ENCODE measurements at regions of chr16 and their contacts with region 1.

Region 1: GRCh38 chr16:4416200-4417032 is at the start of gene CORO7:
- DNase-seq: peak; percentile 98 to 100 (median 99)
- ATAC-seq: peak; percentile 71
- H3K4me3 ChIP-seq: peak within 1 kb of the TSS; percentile 81
- H3K4me3 Mint-ChIP-seq: peak within 1 kb of the TSS; percentile 96
- H3K27ac ChIP-seq: peak within 1 kb of the TSS; percentile 91 to 98
- H3K27ac Mint-ChIP-seq: peak within 1 kb of the TSS; percentile 95
- H3K4me1 ChIP-seq: peaks cover 51% of the 10 kb centered on the region
- H3K4me1 Mint-ChIP-seq: peaks cover 29% of the 10 kb centered on the region
- H3K27me3 ChIP-seq: no peaks in the 10 kb centered on the region
- H3K27me3 Mint-ChIP-seq: no peaks in the 10 kb centered on the region
- CTCF ChIP-seq: no peak
- total RNA-seq, gene CORO7: 801 to 805 TPM

Region 2: GRCh38 chr16:4271176-4272066 is 145.0 kb before region 1 on chr16:
- CTCF ChIA-PET with region 1: no interaction called
- POLR2A ChIA-PET with region 1: interaction called, 11 read pairs
- intact Hi-C with region 1: no loop called
- DNase-seq: peak; percentile 74 to 93 (median 86)
- ATAC-seq: peak; percentile 81
- H3K4me3 ChIP-seq: peak overlapping the region; percentile 100
- H3K4me3 Mint-ChIP-seq: peak overlapping the region; percentile 89
- H3K27ac ChIP-seq: peak overlapping the region; percentile 68 to 72
- H3K27ac Mint-ChIP-seq: peak overlapping the region; percentile 97
- H3K4me1 ChIP-seq: peaks cover 25% of the 10 kb centered on the region
- H3K4me1 Mint-ChIP-seq: peaks cover 11% of the 10 kb centered on the region
- H3K27me3 ChIP-seq: no peaks in the 10 kb centered on the region
- H3K27me3 Mint-ChIP-seq: peaks cover 5% of the 10 kb centered on the region
- CTCF ChIP-seq: no peak

Region 3: GRCh38 chr16:4350787-4351659 is 65.4 kb before region 1 on chr16 and contains the start of gene PAM16:
- CTCF ChIA-PET with region 1: no interaction called
- POLR2A ChIA-PET with region 1: no interaction called
- intact Hi-C with region 1: loop called in 1 of 2 experiments (anchors 5 kb)
- DNase-seq: peak; percentile 95 to 100 (median 97)
- ATAC-seq: peak; percentile 85
- H3K4me3 ChIP-seq: peak within 1 kb of the TSS; percentile 96
- H3K4me3 Mint-ChIP-seq: peak within 1 kb of the TSS; percentile 98
- H3K27ac ChIP-seq: peak within 1 kb of the TSS; percentile 69 to 71
- H3K27ac Mint-ChIP-seq: peak within 1 kb of the TSS; percentile 94
- H3K4me1 ChIP-seq: peaks cover 42% of the 10 kb centered on the region
- H3K4me1 Mint-ChIP-seq: peaks cover 27% of the 10 kb centered on the region
- H3K27me3 ChIP-seq: no peaks in the 10 kb centered on the region
- H3K27me3 Mint-ChIP-seq: no peaks in the 10 kb centered on the region
- CTCF ChIP-seq: no peak
- total RNA-seq, gene PAM16: 24.9 to 26.8 TPM

Region 4: DNA sequence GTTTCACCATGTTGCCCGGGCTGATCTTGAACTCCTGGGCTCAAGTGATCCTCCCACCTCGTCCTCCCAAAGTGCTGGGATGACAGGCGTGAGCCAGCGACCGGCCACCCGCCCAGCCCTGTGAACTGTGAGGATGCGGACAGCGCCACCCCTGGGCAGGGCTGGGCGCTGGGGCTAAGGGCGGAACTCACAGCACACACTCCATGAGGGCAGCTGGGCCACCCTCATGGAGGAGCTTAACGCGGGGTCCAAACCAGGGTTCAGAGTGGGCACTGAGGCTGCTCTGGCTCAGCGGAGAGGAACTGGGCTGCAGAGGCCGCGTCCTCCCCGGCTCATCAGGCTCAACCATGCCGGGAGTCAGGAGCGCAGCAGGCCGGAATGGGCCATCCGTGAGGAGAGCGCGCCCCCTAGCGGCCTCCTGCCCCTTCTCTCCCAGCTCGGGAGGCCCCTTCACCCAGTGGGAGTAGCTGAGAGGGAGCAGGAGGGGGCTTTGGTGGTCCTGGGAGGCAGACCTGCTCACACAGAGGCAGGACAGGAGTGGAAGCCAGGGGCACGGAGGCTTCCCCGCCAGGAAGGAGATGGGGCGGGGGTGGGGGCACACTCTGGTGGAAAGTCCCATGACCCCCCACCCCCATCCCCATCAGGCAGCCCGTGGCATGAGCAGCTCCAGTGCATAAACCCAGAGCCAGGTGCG is 13.8 kb before region 1 on chr16:
- CTCF ChIA-PET with region 1: interaction called, 45 read pairs
- POLR2A ChIA-PET with region 1: interaction called, 4 read pairs
- intact Hi-C with region 1: no loop called
- DNase-seq: peak in 13 of 14 experiments; percentile 47 to 78 (median 64)
- ATAC-seq: peak; percentile 39
- H3K4me3 ChIP-seq: no peak overlapping the region
- H3K4me3 Mint-ChIP-seq: peak overlapping the region; percentile 20
- H3K27ac ChIP-seq: no peak overlapping the region
- H3K27ac Mint-ChIP-seq: peak overlapping the region; percentile 84
- H3K4me1 ChIP-seq: peaks cover 23% of the 10 kb centered on the region
- H3K4me1 Mint-ChIP-seq: peaks cover 22% of the 10 kb centered on the region
- H3K27me3 ChIP-seq: no peaks in the 10 kb centered on the region
- H3K27me3 Mint-ChIP-seq: no peaks in the 10 kb centered on the region
- CTCF ChIP-seq: peak; percentile 77

Region 5: DNA sequence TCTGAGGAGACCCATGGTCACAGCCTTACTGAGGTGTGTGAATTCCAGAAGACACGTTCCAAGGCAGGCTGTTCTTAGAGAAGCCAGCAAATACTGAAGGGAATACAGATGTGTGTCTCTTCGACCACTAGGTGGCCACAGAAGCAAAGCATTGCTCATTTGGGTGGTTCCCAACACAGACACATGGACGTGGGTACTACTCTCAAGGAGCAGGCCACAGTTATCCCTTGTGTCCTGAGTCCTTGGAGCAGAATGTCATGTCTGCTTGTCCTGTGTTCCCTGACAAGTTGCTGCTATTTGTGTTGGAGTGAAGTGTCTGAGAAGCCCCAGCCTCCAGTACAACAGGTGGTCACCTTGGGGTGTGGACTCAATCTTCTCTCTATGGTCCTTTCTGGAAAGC is 90.0 kb after region 1 on chr16:
- CTCF ChIA-PET with region 1: interaction called, 3 read pairs
- POLR2A ChIA-PET with region 1: interaction called, 13 read pairs
- intact Hi-C with region 1: no loop called
- DNase-seq: peak; percentile 37 to 87 (median 48)
- ATAC-seq: peak; percentile 30
- H3K4me3 ChIP-seq: no peak overlapping the region
- H3K4me3 Mint-ChIP-seq: peak overlapping the region; percentile 82
- H3K27ac ChIP-seq: peak overlapping the region; percentile 78 to 84
- H3K27ac Mint-ChIP-seq: peak overlapping the region; percentile 97
- H3K4me1 ChIP-seq: peaks cover 72% of the 10 kb centered on the region
- H3K4me1 Mint-ChIP-seq: peaks cover 65% of the 10 kb centered on the region
- H3K27me3 ChIP-seq: no peaks in the 10 kb centered on the region
- H3K27me3 Mint-ChIP-seq: no peaks in the 10 kb centered on the region
- CTCF ChIP-seq: peak; percentile 86

Measured in CD4-positive, alpha-beta T cell (primary cell).